ENCODE measurements at regions of chr3 and their contacts with region 1.

Region 1: DNA sequence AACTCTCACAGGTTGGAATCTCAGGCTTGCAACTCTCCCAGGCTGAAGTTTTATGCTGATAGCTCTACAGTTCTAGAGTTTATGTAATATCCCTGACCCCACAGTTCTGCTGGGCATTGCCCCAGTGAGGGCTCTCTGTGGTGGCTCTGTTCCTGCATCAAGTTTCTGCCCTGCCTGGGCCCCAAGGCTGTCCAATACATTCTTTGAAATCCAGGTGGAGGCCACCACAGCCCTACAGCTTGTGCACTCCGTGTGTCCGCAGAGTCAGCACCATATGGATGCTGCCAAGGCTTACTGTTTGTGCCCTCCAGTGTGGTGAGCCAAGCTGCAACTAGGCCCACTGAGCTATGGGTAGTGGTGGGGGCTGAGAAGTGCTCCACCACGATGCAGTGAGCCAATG is 1141.2 kb upstream of the EPHA6 start:
- DNase-seq: no peak
- ATAC-seq: no peak
- H3K4me3 ChIP-seq: no peak overlapping the region
- H3K27ac ChIP-seq: no peak overlapping the region
- H3K4me1 ChIP-seq: no peaks in the 10 kb centered on the region
- H3K27me3 ChIP-seq: no peaks in the 10 kb centered on the region
- CTCF ChIP-seq: no peak

Region 2: GRCh38 chr3:95627293-95627692 is 45.9 kb before region 1 on chr3:
- intact Hi-C with region 1: no loop called
- DNase-seq: no peak
- ATAC-seq: no peak
- H3K4me3 ChIP-seq: no peak overlapping the region
- H3K27ac ChIP-seq: no peak overlapping the region
- H3K4me1 ChIP-seq: no peaks in the 10 kb centered on the region
- H3K27me3 ChIP-seq: no peaks in the 10 kb centered on the region
- CTCF ChIP-seq: no peak

Region 3: GRCh38 chr3:95731753-95732152 is 58.5 kb after region 1 on chr3:
- intact Hi-C with region 1: loop called in 1 of 10 experiments (anchors 10 kb)
- DNase-seq: no peak
- ATAC-seq: no peak
- H3K4me3 ChIP-seq: no peak overlapping the region
- H3K27ac ChIP-seq: no peak overlapping the region
- H3K4me1 ChIP-seq: no peaks in the 10 kb centered on the region
- H3K27me3 ChIP-seq: no peaks in the 10 kb centered on the region
- CTCF ChIP-seq: no peak

Measured in heart right ventricle (tissue), 16 donors.